Activated T-helper 1 cell treated with anti-CD3 and anti-CD28 coated beads, Interleukin-12 subunit alpha, Interleukin-12 subunit beta, Interleukin-2, Interleukin-4 antibody, amounts not matched to agents 30 ng/mL and 10 ng/mL and 1 ng/mL, durations not matched to agents 14 hours and 24 hours and 36 hours (primary cell): ENCODE measurements at regions of chr3 and their contacts with region 1.

Region 1: GRCh38 chr3:143171141-143171970 is 51.8 kb downstream of the CHST2 start:
- DNase-seq: peak; percentile 11
- H3K4me3 Mint-ChIP-seq: peak overlapping the region; percentile 70
- H3K27ac Mint-ChIP-seq: peak overlapping the region; percentile 92
- H3K4me1 Mint-ChIP-seq: peaks cover 68% of the 10 kb centered on the region
- H3K27me3 Mint-ChIP-seq: no peaks in the 10 kb centered on the region

Region 2: GRCh38 chr3:141544697-141545096 is 1626.7 kb before region 1 on chr3:
- intact Hi-C with region 1: loop called (anchors 10 kb)
- DNase-seq: peak; percentile 6
- H3K4me3 Mint-ChIP-seq: peak overlapping the region; percentile 67
- H3K27ac Mint-ChIP-seq: peak overlapping the region; percentile 81
- H3K4me1 Mint-ChIP-seq: peaks cover 60% of the 10 kb centered on the region
- H3K27me3 Mint-ChIP-seq: no peaks in the 10 kb centered on the region

Region 3: DNA sequence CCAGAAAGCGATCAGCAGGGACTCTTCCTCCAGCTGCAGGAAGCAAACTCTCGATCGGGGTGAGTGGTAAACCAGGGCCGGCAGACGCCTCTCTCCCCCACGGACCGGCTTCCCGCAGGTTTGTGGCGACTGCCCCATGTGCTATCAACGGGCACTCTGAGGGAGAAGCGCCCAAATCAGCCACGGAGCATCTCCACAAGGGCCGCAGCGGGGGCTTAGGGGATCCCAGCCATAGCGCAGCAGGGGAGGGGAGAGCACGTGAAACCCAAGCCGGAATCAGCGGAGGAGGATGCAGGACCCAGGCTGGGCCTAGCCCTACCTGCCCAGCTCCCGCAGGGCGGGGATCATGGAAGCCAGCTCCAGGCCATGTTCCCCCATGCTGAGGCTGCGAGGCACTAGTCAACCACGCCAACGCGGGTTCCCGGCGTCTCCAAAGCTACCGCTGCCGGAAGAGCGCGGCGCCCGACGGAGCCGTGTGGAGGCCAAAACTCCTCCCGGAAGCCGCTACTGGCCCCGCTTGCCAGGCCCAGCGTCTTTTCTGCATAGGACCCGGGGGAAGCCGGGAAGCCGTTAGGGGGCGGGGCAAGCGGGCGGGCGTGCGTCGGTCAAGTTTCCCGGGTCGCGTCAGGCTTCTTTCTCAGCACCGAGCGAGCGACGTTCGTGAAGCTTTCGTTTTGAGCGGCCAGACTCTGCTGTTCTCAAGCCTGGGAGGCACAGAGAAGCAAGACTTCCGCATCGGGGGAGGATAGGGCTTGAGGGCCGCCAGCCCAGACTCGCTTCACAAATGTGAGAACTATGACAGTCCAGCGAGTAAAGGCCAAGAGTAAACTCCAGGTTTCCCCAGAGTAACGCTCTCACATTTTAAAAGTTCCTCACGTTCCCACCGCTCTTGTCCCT is 592.8 kb before region 1 on chr3 and contains the start of gene ATR:
- intact Hi-C with region 1: loop called (anchors 5 kb)
- DNase-seq: peak; percentile 96
- H3K4me3 Mint-ChIP-seq: peak within 1 kb of the TSS; percentile 100
- H3K27ac Mint-ChIP-seq: peak within 1 kb of the TSS; percentile 100
- H3K4me1 Mint-ChIP-seq: peaks cover 46% of the 10 kb centered on the region
- H3K27me3 Mint-ChIP-seq: peaks cover 10% of the 10 kb centered on the region
- total RNA-seq, gene ATR: 27.0 and 35.5 TPM in 2 replicates

Region 4: GRCh38 chr3:142723968-142724681 is 447.2 kb before region 1 on chr3 and contains the start of gene TRPC1:
- intact Hi-C with region 1: loop called (anchors 10 kb)
- DNase-seq: peak; percentile 73
- H3K4me3 Mint-ChIP-seq: peak within 1 kb of the TSS; percentile 86
- H3K27ac Mint-ChIP-seq: peak within 1 kb of the TSS; percentile 83
- H3K4me1 Mint-ChIP-seq: peaks cover 4% of the 10 kb centered on the region
- H3K27me3 Mint-ChIP-seq: peaks cover 50% of the 10 kb centered on the region
- total RNA-seq, gene TRPC1: 0.66 and 1.1 TPM in 2 replicates

Region 5: GRCh38 chr3:143024351-143024960 is 146.9 kb before region 1 on chr3:
- intact Hi-C with region 1: no loop called
- DNase-seq: no peak
- H3K4me3 Mint-ChIP-seq: no peak overlapping the region
- H3K27ac Mint-ChIP-seq: no peak overlapping the region
- H3K4me1 Mint-ChIP-seq: peaks cover 5% of the 10 kb centered on the region
- H3K27me3 Mint-ChIP-seq: no peaks in the 10 kb centered on the region

Region 6: GRCh38 chr3:143207338-143207961 is 36.1 kb after region 1 on chr3:
- intact Hi-C with region 1: loop called (anchors 2 kb)
- DNase-seq: peak; percentile 6
- H3K4me3 Mint-ChIP-seq: no peak overlapping the region
- H3K27ac Mint-ChIP-seq: peak overlapping the region; percentile 66
- H3K4me1 Mint-ChIP-seq: peaks cover 18% of the 10 kb centered on the region
- H3K27me3 Mint-ChIP-seq: no peaks in the 10 kb centered on the region

Region 7: DNA sequence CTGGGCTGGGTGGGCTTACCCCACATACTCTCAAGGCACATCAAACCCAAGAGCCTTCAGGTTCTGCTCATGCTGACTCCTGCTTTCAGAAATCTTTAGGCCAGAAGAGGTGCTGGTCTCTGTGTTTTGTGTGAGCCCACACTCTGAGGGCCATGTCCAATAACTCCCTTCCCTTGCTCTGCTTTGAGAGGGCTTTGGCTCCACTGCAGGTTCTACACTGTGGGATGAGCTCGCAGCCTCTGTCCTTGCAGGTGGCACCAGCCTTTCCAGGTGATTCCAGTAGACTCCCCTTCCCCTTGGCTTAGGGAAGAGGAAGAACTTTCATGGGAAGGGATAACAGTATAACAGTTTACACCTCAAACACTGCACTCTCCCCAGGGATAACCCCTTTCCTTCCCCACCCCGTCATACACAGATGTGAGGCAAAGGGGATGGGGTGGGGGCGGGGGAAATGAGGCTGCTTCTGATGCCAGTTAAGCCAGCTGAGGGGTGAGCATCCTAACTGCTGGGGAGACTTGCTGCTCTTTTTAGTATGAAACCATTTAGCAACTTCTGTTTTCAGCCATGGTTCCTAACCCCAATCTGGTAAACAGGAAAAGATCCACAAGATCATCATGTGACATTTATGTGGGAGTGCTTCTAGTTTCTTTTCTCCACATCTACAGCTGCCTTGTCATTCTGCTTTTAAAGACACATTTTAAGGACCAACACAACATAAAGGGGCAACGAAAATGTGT is 414.5 kb after region 1 on chr3:
- intact Hi-C with region 1: loop called (anchors 5 kb)
- DNase-seq: no peak
- H3K4me3 Mint-ChIP-seq: no peak overlapping the region
- H3K27ac Mint-ChIP-seq: peak overlapping the region; percentile 20
- H3K4me1 Mint-ChIP-seq: peaks cover 21% of the 10 kb centered on the region
- H3K27me3 Mint-ChIP-seq: no peaks in the 10 kb centered on the region

Region 8: DNA sequence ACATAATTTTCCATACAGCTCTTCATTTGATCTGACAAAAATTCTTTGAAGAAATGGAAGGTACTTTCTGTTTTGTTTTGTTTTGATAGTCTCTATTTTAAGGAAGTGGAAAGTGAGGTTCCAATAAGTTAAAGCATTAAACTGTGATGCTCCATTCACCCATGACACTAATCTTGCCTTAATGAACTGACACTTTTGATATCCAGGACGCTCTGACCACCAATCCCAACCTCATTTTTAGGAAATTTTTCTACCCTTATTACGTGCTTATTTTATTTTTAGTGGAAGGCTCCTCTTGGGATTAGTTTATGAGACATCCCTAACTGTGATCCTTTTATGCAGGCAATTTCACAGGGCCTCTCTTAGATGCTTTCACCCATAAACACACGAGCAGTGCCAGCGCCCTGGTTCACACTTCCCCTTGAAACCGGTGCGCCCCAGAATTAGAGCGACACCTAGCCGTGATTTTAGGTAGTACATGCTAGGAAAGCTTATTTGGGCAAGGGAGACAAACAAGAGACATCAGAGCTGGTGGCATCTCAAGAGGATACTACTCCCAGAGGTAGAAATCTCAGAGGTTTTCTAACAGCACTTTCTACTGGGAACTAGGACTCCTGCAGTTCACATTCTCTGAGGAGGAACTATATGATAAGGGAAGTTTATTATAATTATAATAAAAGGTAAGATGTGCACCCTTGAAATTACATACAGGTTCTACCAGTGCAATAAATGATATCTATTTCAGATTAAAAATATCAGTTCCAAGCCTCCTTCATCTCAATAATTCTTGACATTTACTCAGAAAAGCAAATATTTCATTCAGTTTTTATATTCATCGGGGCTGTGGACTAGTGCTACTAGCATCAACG is 503.0 kb after region 1 on chr3:
- intact Hi-C with region 1: loop called (anchors 5 kb)
- DNase-seq: peak; percentile 64
- H3K4me3 Mint-ChIP-seq: no peak overlapping the region
- H3K27ac Mint-ChIP-seq: peak overlapping the region; percentile 11
- H3K4me1 Mint-ChIP-seq: peaks cover 7% of the 10 kb centered on the region
- H3K27me3 Mint-ChIP-seq: no peaks in the 10 kb centered on the region